Activated naive CD4-positive, alpha-beta T cell treated with anti-CD3 and anti-CD28 coated beads for 36 hours (primary cell): ENCODE measurements at regions of chr2 and their contacts with region 1.

Region 1: DNA sequence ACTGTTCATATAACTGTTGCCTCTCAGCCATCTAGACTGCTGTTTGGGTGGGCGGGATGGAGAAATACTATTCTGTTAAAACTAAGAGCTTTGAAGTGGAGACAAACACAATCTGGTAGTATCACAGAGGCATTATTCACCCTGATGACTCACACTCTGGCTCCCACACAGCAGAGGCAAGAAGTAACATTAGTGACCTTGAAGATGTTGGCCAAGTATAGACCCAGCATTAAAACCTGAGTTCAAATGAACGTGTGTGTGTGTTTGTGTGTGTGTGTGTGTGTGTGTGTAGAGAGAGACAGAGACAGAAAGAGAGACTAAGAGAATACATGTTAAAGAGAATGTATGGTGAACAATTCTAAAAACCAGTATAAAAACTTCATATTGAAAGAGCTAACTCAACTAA is 22.5 kb upstream of the ACVR1 start:
- DNase-seq: peak; percentile 87
- H3K4me3 Mint-ChIP-seq: peak overlapping the region; percentile 76
- H3K27ac Mint-ChIP-seq: peak overlapping the region; percentile 99
- H3K4me1 Mint-ChIP-seq: peaks cover 77% of the 10 kb centered on the region
- H3K27me3 Mint-ChIP-seq: no peaks in the 10 kb centered on the region

Region 2: GRCh38 chr2:157312866-157313486 is 585.6 kb before region 1 on chr2:
- CTCF ChIA-PET with region 1: no interaction called
- intact Hi-C with region 1: loop called (anchors 1 kb)
- DNase-seq: peak; percentile 17
- H3K4me3 Mint-ChIP-seq: no peak overlapping the region
- H3K27ac Mint-ChIP-seq: peak overlapping the region; percentile 41
- H3K4me1 Mint-ChIP-seq: peaks cover 49% of the 10 kb centered on the region
- H3K27me3 Mint-ChIP-seq: no peaks in the 10 kb centered on the region

Region 3: GRCh38 chr2:157468931-157469708 is 429.5 kb before region 1 on chr2:
- CTCF ChIA-PET with region 1: interaction called, 4 read pairs
- intact Hi-C with region 1: loop called (anchors 2 kb)
- DNase-seq: peak; percentile 27
- H3K4me3 Mint-ChIP-seq: peak overlapping the region; percentile 64
- H3K27ac Mint-ChIP-seq: peak overlapping the region; percentile 99
- H3K4me1 Mint-ChIP-seq: peaks cover 94% of the 10 kb centered on the region
- H3K27me3 Mint-ChIP-seq: no peaks in the 10 kb centered on the region

Region 4: DNA sequence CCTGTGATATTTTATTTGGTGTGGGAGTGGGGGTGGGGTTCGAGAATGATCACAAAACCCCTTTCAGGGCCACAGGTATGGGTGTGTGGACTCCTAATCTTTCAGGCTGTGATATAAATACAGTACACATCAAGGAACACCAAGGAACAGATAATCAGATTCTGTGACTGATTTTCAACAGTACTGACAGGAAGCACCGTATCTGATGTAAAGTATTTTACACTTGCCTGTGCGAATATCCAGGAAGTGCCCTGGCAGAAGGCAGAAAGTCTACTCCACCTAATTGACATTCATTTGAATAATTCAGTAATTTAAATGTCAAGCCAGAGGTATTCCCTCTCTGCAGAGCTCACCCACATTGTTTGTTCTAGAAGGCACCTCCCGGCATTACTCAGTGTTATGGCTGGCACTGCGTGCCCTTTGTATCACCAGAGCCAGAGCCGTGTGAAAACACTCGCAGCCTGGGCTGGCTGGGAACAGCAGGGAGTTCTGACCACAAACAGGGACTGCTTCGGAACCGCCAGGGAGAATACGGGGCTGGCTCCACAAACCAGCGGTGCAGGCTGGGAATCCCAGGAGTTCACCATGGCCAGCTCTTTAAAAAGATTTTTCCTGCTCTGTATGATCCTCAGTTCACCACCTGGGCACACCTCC is 114.3 kb before region 1 on chr2:
- CTCF ChIA-PET with region 1: interaction called, 3 read pairs
- intact Hi-C with region 1: loop called (anchors 1 kb)
- DNase-seq: peak; percentile 47
- H3K4me3 Mint-ChIP-seq: no peak overlapping the region
- H3K27ac Mint-ChIP-seq: peak overlapping the region; percentile 62
- H3K4me1 Mint-ChIP-seq: peaks cover 38% of the 10 kb centered on the region
- H3K27me3 Mint-ChIP-seq: no peaks in the 10 kb centered on the region

Region 5: GRCh38 chr2:157876066-157876787 is 22.4 kb before region 1 on chr2 and contains the start of gene ACVR1:
- CTCF ChIA-PET with region 1: interaction called, 14 read pairs
- intact Hi-C with region 1: loop called (anchors 1 kb)
- DNase-seq: peak; percentile 91
- H3K4me3 Mint-ChIP-seq: peak within 1 kb of the TSS; percentile 94
- H3K27ac Mint-ChIP-seq: peak within 1 kb of the TSS; percentile 88
- H3K4me1 Mint-ChIP-seq: peaks cover 51% of the 10 kb centered on the region
- H3K27me3 Mint-ChIP-seq: no peaks in the 10 kb centered on the region
- total RNA-seq, gene ACVR1: 19.0 to 20.8 TPM

Region 6: DNA sequence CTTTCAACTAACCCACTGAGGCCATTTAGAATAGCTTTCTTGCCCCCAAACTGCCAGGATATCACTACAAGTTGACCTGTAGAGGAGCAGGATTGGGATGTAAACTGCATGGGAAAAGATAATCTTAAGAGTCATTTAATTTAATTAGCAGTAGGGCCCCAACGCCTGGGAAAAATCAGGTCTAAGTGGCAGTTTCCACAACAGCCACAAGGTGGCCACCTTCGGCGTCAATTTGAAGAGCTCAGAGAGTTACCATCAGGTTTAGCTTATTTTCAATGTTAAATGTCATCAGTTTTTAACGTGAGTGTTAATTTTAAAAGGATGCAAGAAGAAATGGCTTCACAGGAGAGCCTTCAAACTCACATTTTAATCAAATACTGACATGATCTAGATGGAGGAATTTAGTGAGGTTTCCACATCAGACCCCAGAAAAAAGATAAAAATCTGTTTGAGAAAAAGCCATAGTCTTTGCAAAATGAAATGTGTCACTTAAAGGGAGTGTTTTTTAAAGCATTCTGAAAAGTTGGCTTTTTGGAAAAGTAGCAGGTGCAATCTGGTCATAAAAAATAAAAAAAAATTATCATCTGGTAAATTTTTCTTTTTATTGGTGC is 125.8 kb after region 1 on chr2:
- CTCF ChIA-PET with region 1: no interaction called
- intact Hi-C with region 1: no loop called
- DNase-seq: peak; percentile 76
- H3K4me3 Mint-ChIP-seq: no peak overlapping the region
- H3K27ac Mint-ChIP-seq: no peak overlapping the region
- H3K4me1 Mint-ChIP-seq: peaks cover 7% of the 10 kb centered on the region
- H3K27me3 Mint-ChIP-seq: no peaks in the 10 kb centered on the region